ENCODE measurements at regions of chr3 and their contacts with region 1.

Region 1: GRCh38 chr3:105366326-105367062 is at the start of gene ALCAM:
- DNase-seq: peak; percentile 88
- ATAC-seq: peak; percentile 61
- H3K4me3 ChIP-seq: peak within 1 kb of the TSS; percentile 78 to 91 (median 88)
- H3K4me3 Mint-ChIP-seq: peak within 1 kb of the TSS; percentile 99
- H3K27ac ChIP-seq: peak within 1 kb of the TSS; percentile 98
- H3K27ac Mint-ChIP-seq: peak within 1 kb of the TSS; percentile 100
- H3K4me1 ChIP-seq: peaks cover 14 to 17% of the 10 kb centered on the region in 2 donors
- H3K4me1 Mint-ChIP-seq: peaks cover 32% of the 10 kb centered on the region
- H3K27me3 ChIP-seq: peaks cover 0 to 5% (median 0%) of the 10 kb centered on the region in 4 experiments
- H3K27me3 Mint-ChIP-seq: no peaks in the 10 kb centered on the region
- CTCF ChIP-seq: peak; percentile 1
- total RNA-seq, gene ALCAM: 23.8 and 25.5 TPM in 2 replicates

Region 2: DNA sequence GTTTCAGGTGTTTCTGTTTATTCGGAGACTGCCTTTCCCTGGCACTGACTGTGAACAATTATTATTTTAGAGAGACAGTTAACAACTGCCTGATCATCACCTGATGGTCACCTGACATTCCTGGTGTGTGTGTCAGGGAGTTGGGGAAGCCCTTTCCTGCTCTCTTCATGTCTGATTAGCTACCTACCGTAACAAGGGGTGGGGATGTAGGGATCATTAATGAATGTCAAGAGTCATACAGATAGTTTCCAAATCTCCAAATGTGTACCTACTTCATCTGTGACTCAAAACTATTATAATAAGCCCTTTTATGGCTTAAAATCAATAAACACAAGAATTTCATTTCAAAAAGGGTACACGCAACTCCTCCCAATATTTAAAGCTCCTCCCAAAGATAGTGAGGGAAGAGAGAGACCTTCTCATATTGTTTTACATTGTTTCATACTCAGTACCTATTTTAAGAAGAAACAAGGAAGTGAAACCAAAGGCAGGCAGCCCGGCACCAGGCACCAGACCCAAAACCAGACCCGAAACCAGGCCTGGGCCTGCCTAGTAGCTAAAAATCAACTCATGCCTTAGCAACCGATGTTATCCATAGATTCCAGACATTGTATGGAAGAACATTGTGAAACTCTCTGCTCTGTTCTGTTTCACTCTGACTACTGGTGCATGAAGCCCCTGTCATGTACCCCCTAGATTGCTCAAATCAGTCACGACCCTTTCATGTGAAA is 844.7 kb before region 1 on chr3:
- CTCF ChIA-PET with region 1: no interaction called
- POLR2A ChIA-PET with region 1: interaction called, 4 read pairs
- intact Hi-C with region 1: loop called (anchors 2 kb)
- DNase-seq: peak; percentile 85
- ATAC-seq: peak; percentile 58
- H3K4me3 ChIP-seq: peak overlapping the region in 1 of 5 experiments; percentile 12
- H3K4me3 Mint-ChIP-seq: peak overlapping the region; percentile 82
- H3K27ac ChIP-seq: peak overlapping the region; percentile 93 to 98
- H3K27ac Mint-ChIP-seq: peak overlapping the region; percentile 98
- H3K4me1 ChIP-seq: peaks cover 70 to 71% of the 10 kb centered on the region in 2 donors
- H3K4me1 Mint-ChIP-seq: peaks cover 69% of the 10 kb centered on the region
- H3K27me3 ChIP-seq: no peaks in the 10 kb centered on the region
- H3K27me3 Mint-ChIP-seq: no peaks in the 10 kb centered on the region
- CTCF ChIP-seq: no peak

Region 3: DNA sequence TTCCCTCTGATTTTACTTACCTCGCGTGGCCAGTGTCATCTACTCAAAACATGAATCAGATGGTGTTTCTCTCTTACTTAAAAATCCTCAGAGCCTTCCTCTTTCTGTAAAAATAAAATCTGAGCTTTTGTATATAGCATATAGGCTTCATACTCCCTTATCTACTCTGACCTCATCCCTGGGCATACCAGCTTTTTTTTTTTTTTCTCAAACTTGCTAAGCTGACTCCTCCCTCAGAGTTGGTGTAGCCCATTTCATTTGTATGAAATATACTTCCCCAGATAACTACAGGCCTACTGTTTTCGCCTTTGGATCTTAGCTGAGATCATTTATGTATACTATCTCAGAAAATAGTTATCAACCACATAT is 648.7 kb before region 1 on chr3:
- CTCF ChIA-PET with region 1: interaction called, 4 read pairs
- POLR2A ChIA-PET with region 1: interaction called, 3 read pairs
- intact Hi-C with region 1: loop called (anchors 5 kb)
- DNase-seq: peak; percentile 57
- ATAC-seq: peak; percentile 58
- H3K4me3 ChIP-seq: peak overlapping the region in 2 of 5 experiments; percentile 32 to 39
- H3K4me3 Mint-ChIP-seq: peak overlapping the region; percentile 72
- H3K27ac ChIP-seq: peak overlapping the region; percentile 74 to 84
- H3K27ac Mint-ChIP-seq: peak overlapping the region; percentile 89
- H3K4me1 ChIP-seq: peaks cover 12 to 14% of the 10 kb centered on the region in 2 donors
- H3K4me1 Mint-ChIP-seq: peaks cover 22% of the 10 kb centered on the region
- H3K27me3 ChIP-seq: no peaks in the 10 kb centered on the region
- H3K27me3 Mint-ChIP-seq: no peaks in the 10 kb centered on the region
- CTCF ChIP-seq: no peak

Region 4: GRCh38 chr3:105431200-105431599 is 64.7 kb after region 1 on chr3:
- CTCF ChIA-PET with region 1: no interaction called
- POLR2A ChIA-PET with region 1: no interaction called
- intact Hi-C with region 1: no loop called
- DNase-seq: peak; percentile 5
- ATAC-seq: no peak
- H3K4me3 ChIP-seq: no peak overlapping the region
- H3K4me3 Mint-ChIP-seq: no peak overlapping the region
- H3K27ac ChIP-seq: no peak overlapping the region
- H3K27ac Mint-ChIP-seq: no peak overlapping the region
- H3K4me1 ChIP-seq: peaks cover 4 to 7% of the 10 kb centered on the region in 2 donors
- H3K4me1 Mint-ChIP-seq: peaks cover 24% of the 10 kb centered on the region
- H3K27me3 ChIP-seq: no peaks in the 10 kb centered on the region
- H3K27me3 Mint-ChIP-seq: no peaks in the 10 kb centered on the region
- CTCF ChIP-seq: no peak

Region 5: DNA sequence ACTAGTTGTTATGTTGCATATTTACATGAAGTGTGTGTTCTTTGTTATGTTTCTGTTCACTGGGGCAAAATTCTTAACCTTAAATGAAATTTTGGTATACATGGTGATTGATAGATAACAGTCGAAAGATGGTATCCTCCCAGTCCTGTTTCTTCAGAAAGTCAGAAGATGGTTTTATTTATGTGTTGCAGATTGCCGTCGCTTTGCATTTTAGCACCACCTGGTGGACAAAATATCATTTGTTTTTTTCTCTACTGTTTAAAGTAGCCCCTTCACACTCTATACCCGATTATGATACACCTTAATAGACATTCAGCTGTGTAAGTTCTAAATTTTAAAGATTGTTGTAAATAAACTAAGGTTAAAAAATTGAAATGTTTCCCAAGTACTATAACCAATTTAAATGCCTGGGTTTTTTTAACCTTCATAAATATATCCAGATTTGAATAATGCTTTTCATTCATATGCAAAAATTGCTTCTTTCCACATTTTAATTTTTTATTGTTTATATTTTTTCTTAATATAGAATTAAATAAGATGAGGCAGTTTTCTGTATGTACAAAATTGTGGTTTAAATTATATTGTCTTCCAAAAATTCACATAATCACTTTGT is 152.4 kb after region 1 on chr3:
- CTCF ChIA-PET with region 1: interaction called, 3 read pairs
- POLR2A ChIA-PET with region 1: no interaction called
- intact Hi-C with region 1: loop called (anchors 2 kb)
- DNase-seq: peak; percentile 77
- ATAC-seq: peak; percentile 57
- H3K4me3 ChIP-seq: no peak overlapping the region
- H3K4me3 Mint-ChIP-seq: no peak overlapping the region
- H3K27ac ChIP-seq: no peak overlapping the region
- H3K27ac Mint-ChIP-seq: no peak overlapping the region
- H3K4me1 ChIP-seq: no peaks in the 10 kb centered on the region
- H3K4me1 Mint-ChIP-seq: peaks cover 4% of the 10 kb centered on the region
- H3K27me3 ChIP-seq: no peaks in the 10 kb centered on the region
- H3K27me3 Mint-ChIP-seq: no peaks in the 10 kb centered on the region
- CTCF ChIP-seq: peak; percentile 89

Region 6: GRCh38 chr3:105676621-105677300 is 310.3 kb after region 1 on chr3:
- CTCF ChIA-PET with region 1: no interaction called
- POLR2A ChIA-PET with region 1: no interaction called
- intact Hi-C with region 1: no loop called
- DNase-seq: no peak
- ATAC-seq: no peak
- H3K4me3 ChIP-seq: no peak overlapping the region
- H3K4me3 Mint-ChIP-seq: no peak overlapping the region
- H3K27ac ChIP-seq: no peak overlapping the region
- H3K27ac Mint-ChIP-seq: peak overlapping the region; percentile 10
- H3K4me1 ChIP-seq: no peaks in the 10 kb centered on the region
- H3K4me1 Mint-ChIP-seq: peaks cover 6% of the 10 kb centered on the region
- H3K27me3 ChIP-seq: no peaks in the 10 kb centered on the region
- H3K27me3 Mint-ChIP-seq: no peaks in the 10 kb centered on the region
- CTCF ChIP-seq: no peak

Region 7: DNA sequence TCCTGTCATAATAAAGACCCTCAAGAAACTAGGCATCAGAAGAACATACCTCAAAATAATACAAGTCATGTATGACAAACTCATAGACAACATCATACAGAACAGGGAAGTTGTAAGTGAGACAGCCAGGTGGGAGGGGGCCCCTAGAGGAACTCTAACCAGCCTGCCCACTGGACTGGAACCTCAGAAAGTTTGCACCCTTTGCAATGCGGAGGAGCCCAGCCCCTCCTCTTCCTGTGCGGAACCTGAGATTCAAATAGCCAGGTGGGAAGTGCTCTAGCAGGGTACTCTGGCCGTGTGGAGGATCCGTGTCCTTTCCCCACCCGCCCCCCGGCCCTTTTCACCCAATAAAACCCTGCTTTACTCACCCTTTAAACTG is 889.4 kb after region 1 on chr3:
- CTCF ChIA-PET with region 1: no interaction called
- POLR2A ChIA-PET with region 1: no interaction called
- intact Hi-C with region 1: loop called (anchors 10 kb)
- DNase-seq: peak; percentile 83
- ATAC-seq: peak; percentile 97
- H3K4me3 ChIP-seq: peak overlapping the region in 4 of 5 experiments; percentile 59 to 71 (median 64)
- H3K4me3 Mint-ChIP-seq: peak overlapping the region; percentile 74
- H3K27ac ChIP-seq: peak overlapping the region; percentile 84 to 85
- H3K27ac Mint-ChIP-seq: peak overlapping the region; percentile 90
- H3K4me1 ChIP-seq: peaks cover 25 to 31% of the 10 kb centered on the region in 2 donors
- H3K4me1 Mint-ChIP-seq: peaks cover 38% of the 10 kb centered on the region
- H3K27me3 ChIP-seq: no peaks in the 10 kb centered on the region
- H3K27me3 Mint-ChIP-seq: no peaks in the 10 kb centered on the region
- CTCF ChIP-seq: no peak